ENCODE measurements at regions of chr3 and their contacts with region 1.

Region 1: GRCh38 chr3:156554842-156555687 is at the start of gene SSR3:
- H3K4me3 Mint-ChIP-seq: peak within 1 kb of the TSS; percentile 96
- H3K27ac Mint-ChIP-seq: peak within 1 kb of the TSS; percentile 97
- H3K4me1 Mint-ChIP-seq: peaks cover 45% of the 10 kb centered on the region
- H3K27me3 Mint-ChIP-seq: no peaks in the 10 kb centered on the region

Region 2: DNA sequence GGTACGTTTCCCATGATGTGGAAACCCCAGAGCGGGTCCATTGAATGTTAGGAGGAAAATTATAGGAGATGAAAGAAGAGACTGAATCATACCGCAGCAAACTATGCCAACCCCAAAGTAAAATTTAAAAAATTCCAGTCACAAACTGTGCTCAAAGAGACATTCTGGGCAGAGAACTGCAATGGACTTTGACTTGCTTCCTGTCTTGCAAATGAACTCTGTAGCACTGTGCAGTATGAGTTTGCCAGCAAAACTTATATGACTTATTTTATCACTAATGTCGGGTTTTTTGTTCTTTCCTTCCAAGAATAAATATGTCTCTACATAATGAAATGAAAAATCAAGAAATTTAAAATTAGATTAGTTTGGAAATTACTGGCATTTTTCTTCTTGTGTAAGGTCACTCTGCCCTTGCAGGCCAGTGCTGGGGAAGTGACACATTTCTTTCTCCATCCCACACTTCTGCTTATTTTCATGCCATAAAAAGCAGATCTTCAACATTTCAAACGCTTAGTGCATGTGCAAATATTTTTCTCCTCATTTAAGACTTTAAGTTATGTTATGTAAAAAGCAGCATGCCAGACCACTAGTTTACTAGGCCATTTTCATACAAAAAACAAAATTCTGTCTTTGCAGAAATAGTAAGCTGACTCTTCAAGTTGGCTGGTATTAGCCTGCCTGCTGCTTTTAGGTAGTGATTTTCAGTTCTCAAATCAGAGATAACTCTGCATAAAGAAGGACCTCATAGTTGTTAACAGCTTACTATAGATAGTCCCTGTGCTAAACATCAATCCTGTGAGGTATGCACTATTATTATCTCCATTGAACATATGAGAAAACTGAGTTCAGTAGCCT is 32.1 kb after region 1 on chr3:
- intact Hi-C with region 1: loop called (anchors 5 kb)
- H3K4me3 Mint-ChIP-seq: no peak overlapping the region
- H3K27ac Mint-ChIP-seq: peak overlapping the region; percentile 88
- H3K4me1 Mint-ChIP-seq: peaks cover 53% of the 10 kb centered on the region
- H3K27me3 Mint-ChIP-seq: no peaks in the 10 kb centered on the region

Region 3: DNA sequence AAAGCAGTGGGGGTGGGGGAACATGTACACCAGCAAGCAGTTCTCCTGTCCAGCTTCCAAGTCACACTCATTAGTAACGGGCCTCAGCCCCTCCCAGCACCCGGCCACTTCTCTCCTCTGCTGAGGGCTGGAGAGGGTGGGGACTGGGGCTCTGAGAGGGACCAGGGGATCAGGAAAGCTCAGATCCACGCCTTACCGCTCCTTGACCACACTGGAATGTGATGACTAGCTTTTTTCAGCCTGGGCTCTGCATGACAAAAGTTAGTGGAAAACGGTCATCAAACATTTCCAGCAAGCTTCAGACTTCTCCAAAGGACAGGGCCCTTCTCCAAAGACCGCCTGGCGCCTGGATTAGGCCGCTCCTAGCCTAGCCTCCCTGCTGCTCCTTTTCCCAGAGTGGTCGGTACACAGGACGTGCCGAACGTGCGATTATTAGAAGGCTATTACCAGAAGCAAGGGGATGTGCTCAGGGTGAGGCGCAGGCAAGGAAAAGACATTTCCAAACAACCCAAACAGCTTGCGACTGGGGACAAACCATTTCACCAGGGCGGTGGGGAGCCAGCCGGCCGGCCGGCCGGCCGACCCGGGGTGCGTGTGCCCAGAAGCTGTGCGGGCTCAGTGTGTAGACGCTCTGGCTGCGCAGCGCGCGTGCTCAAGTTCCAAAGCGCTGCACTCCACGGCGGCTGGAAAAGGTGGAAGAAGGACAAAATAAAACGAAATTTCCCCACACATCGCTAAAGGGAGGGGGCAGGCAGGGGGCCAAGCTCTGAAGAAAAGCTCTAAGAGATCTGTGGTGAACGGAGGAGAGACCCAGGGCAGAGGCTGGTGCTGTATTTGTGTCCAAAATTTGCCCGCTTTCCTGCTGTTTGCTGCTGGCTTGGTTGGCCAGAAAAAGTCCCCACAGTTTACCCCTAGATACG is 50.9 kb after region 1 on chr3:
- intact Hi-C with region 1: loop called (anchors 2 kb)
- H3K4me3 Mint-ChIP-seq: peak overlapping the region; percentile 74
- H3K27ac Mint-ChIP-seq: peak overlapping the region; percentile 96
- H3K4me1 Mint-ChIP-seq: peaks cover 38% of the 10 kb centered on the region
- H3K27me3 Mint-ChIP-seq: no peaks in the 10 kb centered on the region

Region 4: DNA sequence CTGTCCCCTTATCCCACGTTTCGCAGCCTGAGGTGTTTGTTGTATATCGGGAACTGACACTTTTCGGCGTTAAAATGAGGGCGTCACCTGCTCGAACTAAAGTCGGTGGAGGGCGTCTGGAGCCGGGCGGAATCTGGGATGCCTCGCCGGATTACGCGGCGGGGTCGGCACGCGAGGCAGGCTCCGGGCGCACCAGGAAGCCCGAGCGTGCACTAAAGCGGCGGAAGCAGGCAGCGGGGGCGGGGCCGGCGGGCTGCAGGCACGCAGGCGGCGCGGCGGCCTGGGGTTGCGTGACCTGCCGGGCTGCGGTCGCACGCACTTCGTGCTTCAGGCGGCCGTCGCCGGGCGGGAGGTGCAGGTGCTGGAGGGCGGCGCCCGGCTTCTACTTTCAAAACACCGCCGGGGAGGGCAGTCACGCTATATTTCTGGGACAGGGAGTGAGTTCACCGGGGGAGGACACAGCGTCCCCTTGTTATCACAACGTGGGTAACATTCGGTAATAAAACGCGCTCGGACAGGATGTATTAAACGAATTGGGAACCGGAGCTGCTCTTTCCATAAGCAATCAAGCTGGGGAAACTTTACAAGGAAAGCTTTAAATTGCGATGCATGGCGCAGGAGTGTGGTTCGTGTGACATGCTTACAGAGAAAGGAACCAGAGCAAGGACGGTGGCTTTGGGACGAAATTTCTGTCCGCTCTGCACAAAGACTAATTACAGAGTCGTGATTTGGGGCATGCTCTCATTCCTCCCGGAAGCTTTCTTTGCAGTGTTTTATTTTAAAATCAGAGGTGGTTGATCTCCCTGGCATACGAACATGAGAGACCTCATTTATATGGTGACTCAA is 262.0 kb after region 1 on chr3:
- intact Hi-C with region 1: loop called (anchors 10 kb)
- H3K4me3 Mint-ChIP-seq: peak overlapping the region; percentile 75
- H3K27ac Mint-ChIP-seq: peak overlapping the region; percentile 80
- H3K4me1 Mint-ChIP-seq: peaks cover 40% of the 10 kb centered on the region
- H3K27me3 Mint-ChIP-seq: peaks cover 2% of the 10 kb centered on the region

Region 5: DNA sequence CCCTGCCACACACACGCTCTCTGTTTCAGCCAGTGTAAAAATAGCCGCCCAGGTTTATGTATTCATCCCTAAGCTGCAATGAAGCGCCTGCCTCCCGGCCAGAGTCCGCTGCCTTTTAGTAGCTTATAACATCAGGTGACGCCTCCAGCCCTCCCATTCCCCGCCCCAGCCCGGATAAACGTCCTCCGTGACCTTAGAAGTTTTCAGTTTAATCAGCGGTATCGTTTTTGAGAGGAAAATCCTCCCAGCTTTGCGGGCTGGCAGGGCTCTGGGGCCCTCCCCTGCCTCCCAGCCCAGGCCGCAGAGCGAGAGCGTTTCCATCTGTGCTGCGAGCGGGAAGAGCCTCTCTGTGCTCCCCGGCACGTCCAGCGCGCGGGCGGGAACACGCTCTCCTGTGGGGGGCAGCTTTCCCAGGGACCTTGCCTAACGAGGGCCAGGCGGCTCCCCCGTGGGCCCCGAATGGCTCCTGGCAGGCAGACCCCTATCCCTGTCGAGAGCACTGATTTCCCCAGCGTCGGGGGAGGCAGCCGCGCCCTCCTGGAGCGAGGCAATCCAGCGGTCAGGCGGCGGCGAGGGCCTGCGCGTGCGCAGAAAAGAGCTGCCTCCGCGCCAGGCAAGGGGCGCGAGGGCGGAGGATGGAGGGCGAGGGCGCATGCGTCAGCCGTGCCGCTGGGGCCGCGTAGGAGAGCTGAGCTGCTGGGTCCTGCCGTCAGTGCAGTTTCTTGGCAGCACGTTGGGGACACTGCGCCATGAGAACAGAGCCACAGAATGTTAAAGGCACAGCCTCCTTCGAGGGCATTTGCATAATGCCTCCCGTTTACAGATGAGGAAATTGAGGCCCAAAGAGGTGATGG is 533.8 kb after region 1 on chr3:
- intact Hi-C with region 1: loop called (anchors 2 kb)
- H3K4me3 Mint-ChIP-seq: peak overlapping the region; percentile 81
- H3K27ac Mint-ChIP-seq: peak overlapping the region; percentile 96
- H3K4me1 Mint-ChIP-seq: peaks cover 30% of the 10 kb centered on the region
- H3K27me3 Mint-ChIP-seq: peaks cover 5% of the 10 kb centered on the region

Region 6: GRCh38 chr3:157136647-157137387 is 581.8 kb after region 1 on chr3:
- intact Hi-C with region 1: loop called (anchors 5 kb)
- H3K4me3 Mint-ChIP-seq: no peak overlapping the region
- H3K27ac Mint-ChIP-seq: no peak overlapping the region
- H3K4me1 Mint-ChIP-seq: no peaks in the 10 kb centered on the region
- H3K27me3 Mint-ChIP-seq: no peaks in the 10 kb centered on the region

Measured in dendritic cell treated with granulocyte-macrophage colony-stimulating factor and Interleukin-4, amounts not matched to agents 40 ng/mL and 50 ng/mL, for 4 days (primary cell).